Heart left ventricle (tissue), 16 donors: ENCODE measurements at regions of chr1 and their contacts with region 1.

Region 1: GRCh38 chr1:219666242-219666641 is 53.3 kb upstream of the ZC3H11B start:
- DNase-seq: no peak
- ATAC-seq: peak in 3 of 4 donors; percentile 10 to 29 (median 28)
- H3K4me3 ChIP-seq: no peak overlapping the region
- H3K27ac ChIP-seq: peak overlapping the region in 2 of 12 donors; percentile 24 to 34
- H3K4me1 ChIP-seq: peaks cover 0 to 40% (median 13%) of the 10 kb centered on the region in 12 donors
- H3K27me3 ChIP-seq: peaks cover 0 to 2% (median 0%) of the 10 kb centered on the region in 9 donors
- CTCF ChIP-seq: no peak
- POLR2A ChIP-seq: no peak

Region 2: GRCh38 chr1:219650880-219651279 is 15.4 kb before region 1 on chr1:
- intact Hi-C with region 1: no loop called
- DNase-seq: no peak
- ATAC-seq: no peak
- H3K4me3 ChIP-seq: no peak overlapping the region
- H3K27ac ChIP-seq: no peak overlapping the region
- H3K4me1 ChIP-seq: peaks cover 0 to 4% (median 0%) of the 10 kb centered on the region in 12 donors
- H3K27me3 ChIP-seq: no peaks in the 10 kb centered on the region
- CTCF ChIP-seq: no peak
- POLR2A ChIP-seq: no peak

Region 3: GRCh38 chr1:219732814-219733491 is 66.7 kb after region 1 on chr1:
- intact Hi-C with region 1: loop called in 1 of 10 experiments (anchors 10 kb)
- DNase-seq: no peak
- ATAC-seq: no peak
- H3K4me3 ChIP-seq: no peak overlapping the region
- H3K27ac ChIP-seq: no peak overlapping the region
- H3K4me1 ChIP-seq: peaks cover 0 to 13% (median 0%) of the 10 kb centered on the region in 12 donors
- H3K27me3 ChIP-seq: no peaks in the 10 kb centered on the region
- CTCF ChIP-seq: no peak
- POLR2A ChIP-seq: no peak

Region 4: DNA sequence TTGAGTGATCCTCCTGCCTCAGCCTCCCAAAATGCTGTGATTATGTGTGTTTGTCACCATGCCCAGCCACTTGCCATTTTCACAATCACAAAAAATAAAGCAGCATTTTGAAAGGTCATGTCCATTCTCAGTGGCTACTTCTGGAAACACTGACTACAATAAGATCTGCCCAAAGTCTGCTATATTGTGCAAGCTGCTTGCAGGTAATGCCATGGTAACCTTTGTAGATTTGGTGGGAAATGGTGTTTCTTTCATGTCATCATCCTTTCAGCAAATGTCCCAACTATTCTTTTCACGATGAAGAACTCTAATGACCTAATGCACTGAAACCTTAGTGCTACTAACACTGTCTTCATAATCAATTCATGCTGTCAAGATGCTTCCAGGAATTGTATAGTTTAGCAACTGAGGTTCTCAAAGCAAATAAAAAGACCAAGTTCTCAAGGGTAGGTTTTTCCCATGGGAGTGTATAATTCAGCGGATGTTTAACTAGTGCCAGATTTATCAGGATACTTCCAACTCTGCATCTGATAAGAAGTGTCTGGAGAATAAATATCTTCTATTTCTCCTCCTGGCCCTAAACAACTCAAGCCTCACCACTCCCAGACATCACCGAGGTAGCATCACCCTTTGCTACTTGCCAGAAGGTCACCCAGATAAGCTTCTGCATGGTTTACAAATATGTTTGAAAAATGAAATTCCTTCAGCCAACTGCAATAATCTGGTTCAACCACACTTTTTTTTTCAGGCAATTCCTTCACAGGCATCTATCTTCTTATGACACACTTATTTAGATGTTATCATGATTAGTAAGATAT is 78.6 kb after region 1 on chr1:
- intact Hi-C with region 1: loop called in 2 of 10 experiments (anchors 5 kb)
- DNase-seq: no peak
- ATAC-seq: no peak
- H3K4me3 ChIP-seq: no peak overlapping the region
- H3K27ac ChIP-seq: no peak overlapping the region
- H3K4me1 ChIP-seq: peaks cover 0 to 26% (median 3%) of the 10 kb centered on the region in 12 donors
- H3K27me3 ChIP-seq: no peaks in the 10 kb centered on the region
- CTCF ChIP-seq: no peak
- POLR2A ChIP-seq: no peak

Region 5: DNA sequence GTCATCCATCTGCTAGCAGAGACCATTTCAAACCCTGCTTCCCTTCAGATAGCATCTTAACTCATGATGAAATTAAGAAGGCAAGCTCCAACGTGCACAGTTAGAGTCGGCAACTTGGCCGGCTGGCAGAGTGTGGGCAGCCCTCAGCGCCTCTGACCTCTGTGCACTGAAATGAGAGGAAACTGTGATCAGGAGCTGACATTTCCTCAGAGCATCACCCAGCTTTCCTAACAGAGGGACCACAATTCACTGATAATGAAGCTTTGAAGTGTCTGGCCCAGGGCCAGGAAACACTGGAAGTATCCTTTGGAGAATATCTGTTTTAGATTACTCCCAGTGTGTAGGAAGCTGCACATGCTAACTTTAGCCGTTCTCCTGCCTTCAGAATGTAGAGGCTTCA is 91.6 kb after region 1 on chr1:
- intact Hi-C with region 1: loop called in 1 of 10 experiments (anchors 5 kb)
- DNase-seq: peak; percentile 44 to 82 (median 61)
- ATAC-seq: peak; percentile 12 to 79 (median 67)
- H3K4me3 ChIP-seq: no peak overlapping the region
- H3K27ac ChIP-seq: peak overlapping the region in 2 of 12 donors; percentile 6 to 10
- H3K4me1 ChIP-seq: peaks cover 0 to 28% (median 6%) of the 10 kb centered on the region in 12 donors
- H3K27me3 ChIP-seq: no peaks in the 10 kb centered on the region
- CTCF ChIP-seq: no peak
- POLR2A ChIP-seq: no peak

Region 6: GRCh38 chr1:219792337-219793021 is 126.2 kb after region 1 on chr1:
- intact Hi-C with region 1: loop called in 2 of 10 experiments (anchors 2 to 5 kb)
- DNase-seq: no peak
- ATAC-seq: peak; percentile 55 to 89 (median 71)
- H3K4me3 ChIP-seq: no peak overlapping the region
- H3K27ac ChIP-seq: peak overlapping the region in 2 of 12 donors; percentile 3 to 4
- H3K4me1 ChIP-seq: peaks cover 0 to 23% (median 11%) of the 10 kb centered on the region in 12 donors
- H3K27me3 ChIP-seq: no peaks in the 10 kb centered on the region
- CTCF ChIP-seq: no peak
- POLR2A ChIP-seq: no peak